Pancreas (tissue), 10 donors: ENCODE measurements at regions of chr11 and their contacts with region 1.

Region 1: DNA sequence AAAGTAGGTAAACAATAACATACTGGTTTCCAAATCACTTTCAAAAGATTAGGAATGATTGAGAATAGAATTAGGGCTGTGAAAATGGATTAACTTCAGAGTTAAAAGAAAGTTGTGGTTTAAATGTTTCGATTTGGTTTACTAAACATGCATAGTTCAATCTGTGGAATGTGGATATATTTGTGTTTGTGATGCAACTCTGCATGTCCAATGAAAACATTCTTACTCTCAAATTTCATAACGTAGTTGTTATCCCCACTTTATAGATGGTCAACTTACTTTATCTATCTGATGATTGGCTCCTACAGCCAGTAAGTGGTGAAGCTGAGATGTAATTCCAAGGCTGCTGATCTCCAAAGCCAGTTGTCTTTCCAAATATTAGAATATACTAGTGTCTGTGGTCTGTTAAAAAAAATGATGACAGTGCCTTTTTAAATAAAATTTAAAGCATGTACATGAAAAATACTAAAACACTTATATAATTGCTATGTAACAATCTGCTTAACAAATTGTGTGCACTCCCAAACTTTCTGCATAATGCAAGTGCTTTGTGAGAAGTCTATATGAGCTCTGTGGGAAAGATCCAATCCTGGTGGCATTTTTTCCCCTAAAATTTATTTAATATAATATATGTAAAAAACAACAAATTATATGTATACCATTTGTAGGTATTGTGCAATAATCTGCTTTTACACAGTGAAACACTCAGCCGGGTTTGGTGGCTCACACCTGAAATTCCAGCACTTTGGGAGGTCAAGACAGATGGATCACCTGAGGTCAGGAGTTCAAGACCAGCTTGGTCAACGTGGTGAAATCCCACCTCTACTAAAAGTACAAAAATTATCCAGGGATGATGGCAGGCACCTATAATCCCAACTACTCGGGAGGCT is 9.7 kb upstream of the SIK3 start:
- DNase-seq: no peak
- ATAC-seq: no peak
- H3K4me3 ChIP-seq: no peak overlapping the region
- H3K27ac ChIP-seq: no peak overlapping the region
- H3K4me1 ChIP-seq: no peaks in the 10 kb centered on the region
- H3K27me3 ChIP-seq: no peaks in the 10 kb centered on the region
- CTCF ChIP-seq: no peak

Region 2: DNA sequence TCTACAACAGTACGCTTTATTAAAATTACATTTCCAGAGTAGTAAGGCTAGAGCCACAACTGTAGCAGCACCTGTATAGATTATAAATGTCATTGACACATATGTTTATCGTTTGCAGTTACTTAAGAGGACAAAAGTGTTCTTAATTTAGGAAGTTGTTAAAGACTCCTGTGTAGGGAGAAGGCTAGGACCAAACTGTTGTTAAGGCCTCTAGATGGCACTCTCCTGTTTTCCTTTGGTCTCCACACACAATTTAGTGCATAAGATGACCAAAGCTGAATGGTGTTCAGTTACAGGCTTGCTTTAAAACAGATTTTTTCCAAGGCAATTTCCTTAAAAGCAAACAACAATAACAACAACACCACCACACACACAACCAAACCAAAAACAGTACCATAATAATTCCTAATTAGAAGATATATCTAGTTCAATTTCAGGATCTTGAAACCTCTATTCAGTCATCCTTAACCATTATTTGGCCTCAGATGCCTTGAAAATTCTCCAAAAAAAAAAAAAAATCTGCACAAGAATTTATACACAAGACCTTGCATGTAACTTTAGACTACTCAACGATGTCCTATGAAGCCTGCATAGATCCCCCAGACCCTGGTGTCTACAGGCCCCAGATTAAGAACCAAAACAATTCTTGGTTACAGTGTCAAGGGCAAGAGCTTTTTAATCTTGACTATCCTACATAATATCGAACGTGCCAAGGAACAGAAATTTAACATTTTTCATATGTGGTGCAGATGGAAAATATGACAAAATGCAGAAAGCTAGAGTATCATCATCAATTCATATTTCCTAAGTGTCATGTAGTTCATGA is 227.9 kb before region 1 on chr11:
- intact Hi-C with region 1: loop called (anchors 5 to 10 kb)
- DNase-seq: peak in 1 of 6 donors; percentile 25
- ATAC-seq: peak; percentile 74 to 98 (median 96)
- H3K4me3 ChIP-seq: no peak overlapping the region
- H3K27ac ChIP-seq: no peak overlapping the region
- H3K4me1 ChIP-seq: no peaks in the 10 kb centered on the region
- H3K27me3 ChIP-seq: no peaks in the 10 kb centered on the region
- CTCF ChIP-seq: peak in 2 of 4 donors; percentile 53 to 56